ENCODE measurements at regions of chr11 and their contacts with region 1.

Region 1: DNA sequence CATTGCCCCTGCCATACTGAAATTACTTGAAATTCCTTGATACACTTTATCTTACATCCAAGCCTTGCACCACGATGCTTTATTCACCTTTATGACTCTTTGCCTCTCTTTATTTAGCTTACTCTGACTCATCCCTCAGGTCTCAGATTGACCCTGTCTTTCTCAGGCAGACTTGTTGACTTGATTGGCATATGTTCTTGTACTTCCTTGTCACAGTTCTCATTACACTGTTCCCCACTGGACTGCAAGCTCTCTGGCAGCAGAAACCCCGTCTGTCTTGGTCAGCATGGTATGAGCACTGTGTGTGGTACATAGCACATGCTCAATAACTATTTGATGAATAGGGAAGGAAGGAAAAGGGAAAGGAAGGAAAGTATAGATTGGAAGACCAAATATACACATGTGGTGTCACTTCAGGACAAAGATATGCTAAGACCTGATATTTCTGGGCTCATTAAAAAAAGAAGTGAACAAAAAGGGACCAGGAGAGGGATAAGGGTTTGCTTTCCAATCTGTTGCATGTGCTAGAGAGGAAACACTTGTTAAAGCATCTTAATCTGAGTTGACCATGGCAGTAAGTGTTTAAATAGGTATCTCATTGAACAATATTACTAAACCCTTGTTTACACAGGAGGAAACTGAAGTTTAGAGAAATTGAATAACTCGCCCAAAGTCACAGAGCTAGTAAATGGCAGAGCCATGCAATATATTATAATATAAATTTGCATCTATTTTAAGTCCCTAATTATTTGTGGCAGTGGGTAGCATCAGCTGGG is 7.2 kb downstream of the LYVE1 start:
- H3K4me3 ChIP-seq: no peak overlapping the region
- H3K27ac ChIP-seq: no peak overlapping the region
- H3K4me1 ChIP-seq: no peaks in the 10 kb centered on the region
- CTCF ChIP-seq: no peak

Region 2: GRCh38 chr11:10494636-10495463 is 66.4 kb before region 1 on chr11:
- CTCF ChIA-PET with region 1: no interaction called
- POLR2A ChIA-PET with region 1: interaction called, 10 read pairs
- H3K4me3 ChIP-seq: no peak overlapping the region
- H3K27ac ChIP-seq: no peak overlapping the region
- H3K4me1 ChIP-seq: no peaks in the 10 kb centered on the region
- CTCF ChIP-seq: no peak